Breast epithelium (tissue), 4 donors: ENCODE measurements at regions of chr19 and their contacts with region 1.

Region 1: DNA sequence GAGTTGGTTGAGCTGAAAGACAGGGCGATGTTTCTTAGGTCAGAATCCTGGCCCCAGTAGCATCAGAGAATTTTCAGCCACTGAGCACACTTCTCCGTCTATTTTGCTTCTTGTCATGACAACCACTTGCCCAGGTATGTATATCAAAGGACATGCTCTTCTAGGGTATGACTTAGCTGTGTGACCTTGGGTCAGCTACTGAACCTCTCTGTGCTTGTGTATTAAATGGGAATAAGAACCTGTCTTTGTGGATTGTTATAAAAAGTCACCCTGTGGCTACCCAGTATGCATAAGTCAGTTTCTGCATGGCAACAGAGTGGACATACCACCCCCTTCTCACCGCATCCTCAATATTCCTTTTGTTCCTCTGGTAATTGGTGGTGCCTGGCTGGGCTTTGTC is 26.1 kb downstream of the MBD3L1 start:
- DNase-seq: no peak
- H3K4me3 ChIP-seq: no peak overlapping the region
- H3K27ac ChIP-seq: no peak overlapping the region
- H3K4me1 ChIP-seq: no peaks in the 10 kb centered on the region
- H3K27me3 ChIP-seq: peaks cover 0 to 5% of the 10 kb centered on the region in 2 donors
- CTCF ChIP-seq: no peak
- POLR2A ChIP-seq: no peak

Region 2: GRCh38 chr19:8880868-8881488 is 22.7 kb after region 1 on chr19:
- intact Hi-C with region 1: loop called (anchors 1 kb)
- DNase-seq: no peak
- H3K4me3 ChIP-seq: no peak overlapping the region
- H3K27ac ChIP-seq: no peak overlapping the region
- H3K4me1 ChIP-seq: no peaks in the 10 kb centered on the region
- H3K27me3 ChIP-seq: no peaks in the 10 kb centered on the region
- CTCF ChIP-seq: no peak
- POLR2A ChIP-seq: no peak